ENCODE measurements at regions of chr13 and their contacts with region 1.

Region 1: GRCh38 chr13:56988543-56988942 is 152.2 kb upstream of the PRR20A start:
- DNase-seq: no peak
- H3K4me3 ChIP-seq: no peak overlapping the region
- CTCF ChIP-seq: no peak
- POLR2A ChIP-seq: no peak

Region 2: DNA sequence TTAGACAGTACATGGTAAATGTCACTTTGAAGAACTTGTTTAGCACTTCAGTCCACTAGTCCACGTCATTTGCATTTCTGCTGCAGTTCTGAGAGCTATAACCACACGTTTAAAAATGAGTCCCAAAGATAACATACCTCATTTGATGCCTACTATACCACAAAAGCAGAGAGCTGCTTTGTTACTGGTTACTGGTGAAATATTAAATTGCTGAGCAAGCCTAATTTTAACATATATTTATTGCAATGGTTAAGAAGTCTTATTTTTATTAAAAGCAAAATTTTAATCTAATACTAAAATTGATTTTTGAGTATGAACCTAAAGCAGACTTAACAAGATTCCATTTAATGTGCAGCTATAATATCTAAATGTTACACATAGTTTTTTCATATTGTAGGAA is 1797.5 kb before region 1 on chr13:
- intact Hi-C with region 1: no loop called
- DNase-seq: no peak
- H3K4me3 ChIP-seq: no peak overlapping the region
- CTCF ChIP-seq: no peak
- POLR2A ChIP-seq: no peak

Region 3: GRCh38 chr13:57036290-57036689 is 47.7 kb after region 1 on chr13:
- intact Hi-C with region 1: no loop called
- DNase-seq: no peak
- H3K4me3 ChIP-seq: no peak overlapping the region
- CTCF ChIP-seq: no peak
- POLR2A ChIP-seq: no peak

Region 4: DNA sequence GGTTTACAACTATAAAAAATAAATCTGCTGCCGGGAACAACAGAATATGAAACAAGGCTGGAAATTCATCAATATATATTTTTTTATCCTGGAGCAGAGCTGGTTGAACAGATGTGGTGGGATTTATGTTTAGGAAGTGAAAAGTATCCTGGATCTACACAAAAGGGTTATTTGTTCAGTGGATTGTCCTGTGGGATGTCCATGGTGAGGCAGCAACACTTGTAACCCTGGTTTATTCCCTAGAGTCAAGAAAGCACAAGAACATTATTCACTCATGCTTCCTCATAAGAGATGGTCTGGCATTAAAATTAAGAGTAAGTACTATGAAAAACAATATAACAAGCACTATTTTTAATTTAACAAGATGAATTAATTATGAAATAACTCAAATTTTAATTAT is 224.4 kb after region 1 on chr13:
- intact Hi-C with region 1: no loop called
- DNase-seq: no peak
- H3K4me3 ChIP-seq: no peak overlapping the region
- CTCF ChIP-seq: no peak
- POLR2A ChIP-seq: no peak

Region 5: GRCh38 chr13:57507748-57508463 is 519.4 kb after region 1 on chr13:
- intact Hi-C with region 1: loop called (anchors 5 kb)
- DNase-seq: no peak
- H3K4me3 ChIP-seq: no peak overlapping the region
- CTCF ChIP-seq: no peak
- POLR2A ChIP-seq: no peak

Region 6: GRCh38 chr13:57824121-57824520 is 835.6 kb after region 1 on chr13:
- intact Hi-C with region 1: loop called (anchors 5 kb)
- DNase-seq: no peak
- H3K4me3 ChIP-seq: no peak overlapping the region
- CTCF ChIP-seq: no peak
- POLR2A ChIP-seq: no peak

Region 7: GRCh38 chr13:57878291-57878690 is 889.7 kb after region 1 on chr13:
- intact Hi-C with region 1: loop called (anchors 10 kb)
- DNase-seq: no peak
- H3K4me3 ChIP-seq: no peak overlapping the region
- CTCF ChIP-seq: no peak
- POLR2A ChIP-seq: no peak